ENCODE measurements at regions of chr3 and their contacts with region 1.

Region 1: DNA sequence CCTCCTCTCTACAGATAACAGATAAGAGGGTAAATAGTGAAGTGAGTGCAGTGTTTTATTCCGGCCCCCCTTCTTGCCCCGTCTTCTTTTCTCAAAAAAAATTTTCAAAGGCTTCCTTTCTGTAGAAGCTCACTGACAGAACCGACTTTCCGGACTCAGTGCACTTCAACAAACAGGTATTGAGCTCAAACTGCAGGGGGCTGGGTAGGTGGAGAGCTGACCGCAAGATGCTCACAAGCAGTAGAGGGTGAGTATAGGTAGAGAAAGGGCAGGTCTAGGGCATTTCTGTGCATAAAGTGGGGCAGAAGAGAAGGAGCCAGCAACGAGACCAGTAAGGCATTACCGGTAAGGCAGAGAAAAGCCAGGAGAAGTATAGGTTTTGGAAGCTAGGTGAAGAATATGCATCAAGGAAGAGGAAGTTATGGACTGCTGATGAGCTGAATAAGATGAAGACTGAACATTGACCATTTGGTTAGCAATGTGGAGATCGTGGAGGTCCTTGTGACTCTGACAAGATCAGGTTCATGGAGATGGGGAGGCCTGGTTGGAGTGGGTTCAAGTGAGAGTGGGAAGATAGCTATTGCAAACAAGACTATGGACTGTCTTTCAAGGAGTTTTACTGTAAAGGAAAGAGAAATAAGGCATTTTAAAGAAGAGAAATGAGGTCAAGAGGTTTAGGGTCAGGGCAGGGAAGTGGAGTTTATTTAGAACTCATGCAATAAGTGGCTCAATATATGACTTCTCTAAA is 97.4 kb downstream of the ST6GAL1 start:
- DNase-seq: peak; percentile 87
- H3K4me3 Mint-ChIP-seq: peak overlapping the region; percentile 85
- H3K27ac Mint-ChIP-seq: peak overlapping the region; percentile 97
- H3K4me1 Mint-ChIP-seq: peaks cover 76% of the 10 kb centered on the region
- H3K27me3 Mint-ChIP-seq: no peaks in the 10 kb centered on the region

Region 2: GRCh38 chr3:187041362-187042307 is 13.9 kb after region 1 on chr3:
- CTCF ChIA-PET with region 1: interaction called, 24 read pairs
- POLR2A ChIA-PET with region 1: interaction called, 8 read pairs
- DNase-seq: peak; percentile 65
- H3K4me3 Mint-ChIP-seq: peak overlapping the region; percentile 40
- H3K27ac Mint-ChIP-seq: peak overlapping the region; percentile 90
- H3K4me1 Mint-ChIP-seq: peaks cover 80% of the 10 kb centered on the region
- H3K27me3 Mint-ChIP-seq: no peaks in the 10 kb centered on the region